Transverse colon (tissue), 4 donors: ENCODE measurements at regions of chr11 and their contacts with region 1.

Region 1: GRCh38 chr11:7442588-7443215 is 42.6 kb upstream of the OLFML1 start:
- DNase-seq: peak; percentile 75
- H3K4me3 ChIP-seq: no peak overlapping the region
- H3K27ac ChIP-seq: no peak overlapping the region
- H3K4me1 ChIP-seq: no peaks in the 10 kb centered on the region
- H3K27me3 ChIP-seq: no peaks in the 10 kb centered on the region
- CTCF ChIP-seq: peak; percentile 68 to 88 (median 84)
- EP300 ChIP-seq: no peak
- POLR2A ChIP-seq: no peak

Region 2: DNA sequence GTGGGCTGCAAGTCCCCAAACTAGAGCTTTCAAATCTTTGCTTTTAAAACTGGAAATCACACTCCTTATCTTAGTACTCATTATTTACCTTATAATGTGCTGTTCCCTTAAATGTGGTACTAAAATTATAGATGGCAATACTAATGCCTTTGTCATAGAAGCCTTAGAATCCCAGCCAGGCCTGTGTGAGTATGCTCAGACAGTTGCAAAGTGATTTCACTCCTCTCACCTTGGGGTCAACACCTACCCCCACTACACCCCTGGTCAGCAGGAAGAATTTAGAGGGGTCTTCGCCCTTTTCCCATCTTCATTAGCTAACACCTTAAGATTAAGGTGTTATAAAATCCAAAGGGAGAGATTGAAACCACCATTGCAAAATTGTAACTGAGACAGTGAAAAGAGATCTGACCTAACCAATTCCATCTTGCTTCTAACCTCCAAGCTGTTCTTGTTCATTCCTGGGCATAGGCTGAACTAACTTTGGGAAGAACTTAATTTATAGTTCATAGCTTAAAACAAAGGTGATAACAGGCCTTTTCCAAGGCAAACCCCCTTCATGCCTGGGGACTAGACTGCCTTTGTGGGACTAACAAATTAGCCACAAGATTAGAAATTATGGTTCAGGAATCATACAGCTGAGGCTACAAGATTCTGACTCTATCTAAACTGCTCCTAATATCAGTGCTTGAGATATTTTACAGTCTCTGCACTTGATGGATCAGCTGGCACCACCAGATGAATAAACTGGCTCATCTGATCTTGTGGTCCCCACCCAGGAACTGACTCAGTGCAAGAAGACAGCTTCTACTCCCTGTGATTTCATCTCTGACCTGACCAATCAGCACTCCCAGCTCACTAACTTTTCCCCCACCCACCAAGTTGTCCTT is 749.1 kb before region 1 on chr11:
- in situ Hi-C with region 1: no loop called
- intact Hi-C with region 1: no loop called
- DNase-seq: no peak
- H3K4me3 ChIP-seq: no peak overlapping the region
- H3K27ac ChIP-seq: no peak overlapping the region
- H3K4me1 ChIP-seq: peaks cover 0 to 16% (median 0%) of the 10 kb centered on the region in 4 donors
- H3K27me3 ChIP-seq: no peaks in the 10 kb centered on the region
- CTCF ChIP-seq: no peak
- EP300 ChIP-seq: no peak
- POLR2A ChIP-seq: no peak

Region 3: DNA sequence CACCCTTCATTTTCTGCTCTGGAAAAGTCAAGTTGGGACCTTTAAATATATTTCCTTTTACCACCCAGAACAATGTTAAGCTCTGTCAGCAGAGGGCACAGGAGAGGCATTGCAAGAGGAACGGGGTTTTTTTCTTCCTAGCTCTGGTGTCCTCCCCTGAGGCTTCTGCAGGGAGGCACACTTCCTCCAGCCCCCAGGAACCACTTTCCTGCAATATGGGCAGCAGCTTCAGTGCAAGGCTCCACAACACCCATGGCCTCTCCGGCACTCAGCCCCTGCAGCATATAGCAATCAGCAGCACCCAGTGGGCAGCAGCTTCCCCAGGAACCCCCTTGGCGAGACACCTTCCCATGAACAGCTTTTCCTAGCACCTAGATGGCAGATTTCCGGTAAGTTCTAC is 89.6 kb before region 1 on chr11:
- in situ Hi-C with region 1: loop called in 1 of 4 experiments (anchors 10 kb)
- intact Hi-C with region 1: no loop called
- DNase-seq: peak; percentile 11
- H3K4me3 ChIP-seq: no peak overlapping the region
- H3K27ac ChIP-seq: no peak overlapping the region
- H3K4me1 ChIP-seq: no peaks in the 10 kb centered on the region
- H3K27me3 ChIP-seq: no peaks in the 10 kb centered on the region
- CTCF ChIP-seq: peak; percentile 23 to 52 (median 45)
- EP300 ChIP-seq: no peak
- POLR2A ChIP-seq: no peak